Aorta (tissue), 5 donors: ENCODE measurements at regions of chr3 and their contacts with region 1.

Region 1: GRCh38 chr3:184185461-184186308 is at the start of gene ABCF3:
- DNase-seq: peak; percentile 100
- ATAC-seq: peak; percentile 97
- H3K4me3 ChIP-seq: peak within 1 kb of the TSS; percentile 79 to 88
- H3K27ac ChIP-seq: peak within 1 kb of the TSS; percentile 50 to 77
- H3K4me1 ChIP-seq: no peaks in the 10 kb centered on the region
- H3K27me3 ChIP-seq: no peaks in the 10 kb centered on the region
- total RNA-seq, gene ABCF3: 44.1 to 57.1 TPM

Region 2: GRCh38 chr3:184145111-184145524 is 40.6 kb before region 1 on chr3:
- intact Hi-C with region 1: loop called in 1 of 2 experiments (anchors 5 kb)
- DNase-seq: no peak
- ATAC-seq: peak; percentile 35
- H3K4me3 ChIP-seq: no peak overlapping the region
- H3K27ac ChIP-seq: no peak overlapping the region
- H3K4me1 ChIP-seq: no peaks in the 10 kb centered on the region
- H3K27me3 ChIP-seq: no peaks in the 10 kb centered on the region

Region 3: GRCh38 chr3:184298759-184299496 is 113.2 kb after region 1 on chr3 and contains the start of gene PSMD2:
- intact Hi-C with region 1: loop called in 1 of 2 experiments (anchors 5 kb)
- DNase-seq: peak; percentile 99
- ATAC-seq: peak; percentile 100
- H3K4me3 ChIP-seq: peak within 1 kb of the TSS; percentile 65 to 74
- H3K27ac ChIP-seq: peak within 1 kb of the TSS in 1 of 2 donors; percentile 83
- H3K4me1 ChIP-seq: peaks cover 0 to 1% of the 10 kb centered on the region in 2 donors
- H3K27me3 ChIP-seq: no peaks in the 10 kb centered on the region
- total RNA-seq, gene PSMD2: 139 to 143 TPM